ENCODE measurements at regions of chr20 and their contacts with region 1.

Region 1: GRCh38 chr20:36135159-36135558 is 19.4 kb upstream of the EPB41L1 start:
- DNase-seq: no peak
- ATAC-seq: no peak
- H3K4me3 ChIP-seq: no peak overlapping the region
- H3K27ac ChIP-seq: no peak overlapping the region
- H3K4me1 ChIP-seq: peaks cover 0 to 4% (median 1%) of the 10 kb centered on the region in 4 donors
- H3K27me3 ChIP-seq: no peaks in the 10 kb centered on the region
- CTCF ChIP-seq: no peak
- POLR2A ChIP-seq: no peak

Region 2: GRCh38 chr20:35828434-35828833 is 306.7 kb before region 1 on chr20:
- intact Hi-C with region 1: no loop called
- DNase-seq: peak; percentile 33 to 60 (median 49)
- ATAC-seq: peak; percentile 56 to 87 (median 72)
- H3K4me3 ChIP-seq: no peak overlapping the region
- H3K27ac ChIP-seq: no peak overlapping the region
- H3K4me1 ChIP-seq: peaks cover 0 to 4% (median 0%) of the 10 kb centered on the region in 4 donors
- H3K27me3 ChIP-seq: no peaks in the 10 kb centered on the region
- CTCF ChIP-seq: no peak
- POLR2A ChIP-seq: no peak

Region 3: DNA sequence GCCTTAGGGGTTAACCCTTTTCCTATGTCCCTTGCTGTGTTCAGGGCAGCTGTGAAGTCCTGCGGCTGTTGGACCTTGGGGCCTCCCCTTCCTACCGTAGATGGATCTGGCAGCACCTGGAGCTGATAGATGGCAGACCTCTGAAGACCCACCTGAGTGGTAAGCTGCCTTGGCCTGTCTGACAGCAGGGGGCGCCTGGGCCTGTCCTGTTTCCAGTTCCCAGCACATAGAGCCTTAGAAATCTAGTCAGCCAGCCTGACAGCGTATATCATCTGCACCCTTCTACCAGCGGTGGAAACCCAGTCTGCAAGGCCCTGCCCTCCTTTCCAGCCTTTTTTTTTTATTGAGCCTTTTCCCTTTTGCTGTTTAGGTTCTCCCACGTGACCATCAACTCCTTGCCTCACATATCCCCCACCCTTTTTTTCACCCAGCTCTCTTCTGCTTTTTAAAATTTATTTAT is 140.1 kb before region 1 on chr20:
- intact Hi-C with region 1: loop called (anchors 5 kb)
- DNase-seq: peak; percentile 82 to 86 (median 84)
- ATAC-seq: peak; percentile 97 to 99 (median 98)
- H3K4me3 ChIP-seq: no peak overlapping the region
- H3K27ac ChIP-seq: no peak overlapping the region
- H3K4me1 ChIP-seq: no peaks in the 10 kb centered on the region
- H3K27me3 ChIP-seq: no peaks in the 10 kb centered on the region
- CTCF ChIP-seq: peak; percentile 87 to 93 (median 91)
- POLR2A ChIP-seq: no peak

Measured in right lobe of liver (tissue), 6 donors.